Heart right ventricle (tissue), 16 donors: ENCODE measurements at regions of chr17 and their contacts with region 1.

Region 1: GRCh38 chr17:54220829-54221228 is 398.1 kb downstream of the KIF2B start:
- DNase-seq: no peak
- ATAC-seq: no peak
- H3K4me3 ChIP-seq: no peak overlapping the region
- H3K27ac ChIP-seq: no peak overlapping the region
- H3K4me1 ChIP-seq: no peaks in the 10 kb centered on the region
- H3K27me3 ChIP-seq: no peaks in the 10 kb centered on the region
- CTCF ChIP-seq: no peak

Region 2: GRCh38 chr17:54111576-54111975 is 109.3 kb before region 1 on chr17:
- intact Hi-C with region 1: no loop called
- DNase-seq: no peak
- ATAC-seq: no peak
- H3K4me3 ChIP-seq: no peak overlapping the region
- H3K27ac ChIP-seq: no peak overlapping the region
- H3K4me1 ChIP-seq: no peaks in the 10 kb centered on the region
- H3K27me3 ChIP-seq: no peaks in the 10 kb centered on the region
- CTCF ChIP-seq: no peak

Region 3: DNA sequence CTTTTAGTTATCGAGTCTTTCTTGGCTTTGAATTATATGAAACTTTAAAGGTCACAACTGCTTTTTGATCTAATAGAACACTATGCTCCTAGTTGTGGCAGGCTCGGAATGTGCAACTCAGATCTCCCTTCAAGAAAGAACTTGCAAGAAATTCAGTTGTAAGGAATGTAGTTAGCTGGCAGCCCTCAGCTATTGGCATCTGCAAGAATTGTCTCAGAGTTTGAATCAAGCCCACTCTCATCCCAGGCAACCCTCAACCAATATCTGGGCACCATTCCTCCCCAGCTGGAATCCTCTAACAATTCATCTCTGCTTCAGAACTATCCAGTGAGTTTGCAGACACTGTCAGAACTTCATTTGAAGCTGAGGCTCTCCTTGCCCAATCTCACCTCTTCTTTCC is 49.1 kb after region 1 on chr17:
- intact Hi-C with region 1: loop called in 1 of 10 experiments (anchors 10 kb)
- DNase-seq: no peak
- ATAC-seq: no peak
- H3K4me3 ChIP-seq: no peak overlapping the region
- H3K27ac ChIP-seq: no peak overlapping the region
- H3K4me1 ChIP-seq: no peaks in the 10 kb centered on the region
- H3K27me3 ChIP-seq: no peaks in the 10 kb centered on the region
- CTCF ChIP-seq: no peak